ENCODE measurements at regions of chr21 and their contacts with region 1.

Region 1: DNA sequence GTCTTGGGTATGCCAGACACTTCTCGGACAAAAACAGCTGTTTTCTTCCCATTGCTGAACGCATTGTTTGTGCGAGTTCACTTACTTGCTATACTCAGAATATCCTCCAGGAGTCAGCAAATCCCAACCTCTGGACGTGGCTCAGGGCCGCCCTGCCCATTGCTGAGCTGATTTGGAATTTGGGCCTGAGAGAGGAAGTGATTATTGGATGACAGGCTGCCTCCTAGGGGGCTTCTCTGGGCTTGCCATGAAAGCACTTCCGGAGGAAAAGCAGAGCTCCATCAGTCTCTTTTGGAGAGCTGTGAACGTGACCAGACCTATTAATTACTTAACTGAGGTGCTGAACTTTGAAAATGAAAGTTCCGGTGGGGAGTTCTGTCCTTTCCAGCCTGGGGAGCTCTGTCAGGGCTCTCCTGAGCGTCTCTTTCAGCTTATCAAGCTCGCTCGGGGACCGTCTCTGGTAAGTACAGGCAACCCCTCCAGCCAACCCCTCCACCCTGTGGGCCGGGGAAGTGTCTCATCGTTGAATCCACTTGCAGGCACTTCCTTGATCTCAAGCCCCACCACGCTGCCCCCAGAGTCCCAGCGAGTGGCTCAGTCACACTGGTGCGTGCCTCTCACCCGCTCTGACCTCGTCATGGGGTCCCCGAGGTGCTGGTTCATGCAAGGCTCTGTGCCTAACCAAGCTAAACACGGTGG is 76.9 kb downstream of the CLIC6 start:
- DNase-seq: peak; percentile 25 to 81 (median 54)

Region 2: GRCh38 chr21:35036465-35037383 is 291.0 kb after region 1 on chr21:
- intact Hi-C with region 1: no loop called
- DNase-seq: no peak

Region 3: DNA sequence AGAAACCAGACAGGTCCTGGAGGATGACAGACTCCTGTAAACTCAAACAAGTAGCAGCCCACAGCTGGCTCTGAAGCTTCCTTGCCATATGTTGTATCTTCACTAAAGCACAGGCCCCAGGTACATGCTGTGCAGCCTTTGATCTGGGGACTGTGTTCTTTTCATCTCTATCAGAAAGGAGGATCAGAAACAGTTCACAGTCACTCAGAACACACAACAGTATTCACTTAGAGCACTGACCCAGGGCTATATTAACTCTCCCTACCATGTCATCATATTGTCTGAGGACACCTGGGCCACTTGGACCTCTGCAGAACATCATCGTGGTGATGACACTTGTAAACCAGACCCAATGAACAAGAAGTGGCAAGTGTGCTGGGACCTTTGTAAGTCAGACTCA is 1092.6 kb after region 1 on chr21:
- intact Hi-C with region 1: loop called (anchors 5 kb)
- DNase-seq: peak in 1 of 42 donors; percentile 13